ENCODE measurements at regions of chr3 and their contacts with region 1.

Region 1: GRCh38 chr3:49673715-49674496 is at the start of gene APEH:
- DNase-seq: peak; percentile 88 to 99
- H3K4me3 ChIP-seq: peak within 1 kb of the TSS; percentile 84 to 91 (median 86)
- H3K27ac ChIP-seq: peak within 1 kb of the TSS; percentile 90
- H3K4me1 ChIP-seq: peaks cover 0 to 8% (median 5%) of the 10 kb centered on the region in 4 experiments; a peak in 4 of 7 replicates
- H3K27me3 ChIP-seq: no peaks in the 10 kb centered on the region; a peak in 1 of 7 replicates
- CTCF ChIP-seq: no peak
- EP300 ChIP-seq: 0 out of 3 replicates have a peak, but pooled peaks of 1 of the 2 experiments have one; percentile 6
- POLR2A ChIP-seq: peak in 1 of 2 experiments; percentile 66; a peak in 2 of 3 replicates
- RAD21 ChIP-seq: no peak
- total RNA-seq, gene APEH: 222 and 236 TPM in 2 replicates

Region 2: DNA sequence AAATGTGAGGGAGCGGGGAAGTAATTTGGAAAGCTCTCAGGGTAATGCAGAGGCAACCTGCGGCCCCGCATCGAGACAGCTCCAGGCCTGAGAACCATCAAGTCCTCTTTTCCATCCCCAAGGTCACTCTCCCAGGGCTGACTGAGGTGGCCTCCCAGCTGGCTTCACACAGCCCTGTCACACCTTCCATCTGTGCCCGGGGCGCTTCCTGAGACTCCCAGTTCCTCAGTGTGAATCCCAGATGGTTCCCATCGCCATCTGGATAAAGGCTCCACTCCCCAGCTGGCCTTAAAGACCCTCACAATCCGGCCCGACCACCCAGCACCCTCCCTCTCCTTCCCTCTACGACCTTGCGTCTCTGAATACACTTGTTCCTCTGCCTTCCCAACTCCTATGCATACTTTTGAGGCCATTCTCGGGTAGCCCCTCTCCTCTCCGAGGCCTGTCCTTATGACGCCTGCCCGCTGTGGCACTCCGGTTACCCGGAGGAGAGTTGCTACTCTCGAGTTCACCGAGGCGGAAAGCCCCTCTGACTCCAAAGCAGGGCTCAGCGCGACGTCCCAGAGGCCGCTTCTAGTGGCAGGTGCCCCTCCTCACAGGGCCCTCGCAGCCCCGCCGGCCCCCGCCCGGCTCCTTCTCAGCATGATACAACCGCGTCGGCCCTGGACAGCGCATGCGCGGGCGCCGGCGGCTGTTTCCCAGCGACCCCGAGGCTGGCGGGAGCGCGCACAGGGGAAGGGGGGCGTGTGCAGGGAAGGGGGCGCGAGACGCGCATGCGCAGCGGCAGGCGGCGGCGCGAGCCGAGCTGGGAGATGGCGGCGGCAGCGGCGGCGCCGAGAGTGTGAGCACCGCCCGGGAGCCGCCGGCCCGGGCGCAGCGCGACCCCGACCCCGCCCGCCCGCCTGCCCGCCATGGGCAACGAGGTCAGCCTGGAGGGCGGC is 119.9 kb before region 1 on chr3 and contains the start of gene BSN:
- CTCF ChIA-PET with region 1: interaction called, 30 read pairs
- POLR2A ChIA-PET with region 1: interaction called, 4 read pairs
- DNase-seq: peak; percentile 76 to 97
- H3K4me3 ChIP-seq: peak within 1 kb of the TSS; percentile 78 to 96 (median 90)
- H3K27ac ChIP-seq: peak within 1 kb of the TSS; percentile 27; the same call in 1 of the 2 replicates
- H3K4me1 ChIP-seq: peaks cover 0 to 14% (median 4%) of the 10 kb centered on the region in 4 experiments; a peak in 5 of 7 replicates
- H3K27me3 ChIP-seq: peaks cover 0 to 11% (median 6%) of the 10 kb centered on the region in 4 experiments; a peak in 3 of 7 replicates
- CTCF ChIP-seq: peak in 1 of 3 experiments; percentile 2; a peak in 1 of 4 replicates
- EP300 ChIP-seq: no peak
- POLR2A ChIP-seq: no peak
- RAD21 ChIP-seq: no peak
- total RNA-seq, gene BSN: 2.9 and 3.0 TPM in 2 replicates

Region 3: GRCh38 chr3:49638445-49638844 is 35.5 kb before region 1 on chr3:
- CTCF ChIA-PET with region 1: interaction called, 12 read pairs
- POLR2A ChIA-PET with region 1: interaction called, 3 read pairs
- DNase-seq: no peak
- H3K4me3 ChIP-seq: no peak overlapping the region
- H3K27ac ChIP-seq: no peak overlapping the region
- H3K4me1 ChIP-seq: peaks cover 0 to 3% (median 0%) of the 10 kb centered on the region in 4 experiments; a peak in 1 of 7 replicates
- H3K27me3 ChIP-seq: no peaks in the 10 kb centered on the region
- CTCF ChIP-seq: no peak
- EP300 ChIP-seq: no peak
- POLR2A ChIP-seq: no peak
- RAD21 ChIP-seq: no peak

Region 4: DNA sequence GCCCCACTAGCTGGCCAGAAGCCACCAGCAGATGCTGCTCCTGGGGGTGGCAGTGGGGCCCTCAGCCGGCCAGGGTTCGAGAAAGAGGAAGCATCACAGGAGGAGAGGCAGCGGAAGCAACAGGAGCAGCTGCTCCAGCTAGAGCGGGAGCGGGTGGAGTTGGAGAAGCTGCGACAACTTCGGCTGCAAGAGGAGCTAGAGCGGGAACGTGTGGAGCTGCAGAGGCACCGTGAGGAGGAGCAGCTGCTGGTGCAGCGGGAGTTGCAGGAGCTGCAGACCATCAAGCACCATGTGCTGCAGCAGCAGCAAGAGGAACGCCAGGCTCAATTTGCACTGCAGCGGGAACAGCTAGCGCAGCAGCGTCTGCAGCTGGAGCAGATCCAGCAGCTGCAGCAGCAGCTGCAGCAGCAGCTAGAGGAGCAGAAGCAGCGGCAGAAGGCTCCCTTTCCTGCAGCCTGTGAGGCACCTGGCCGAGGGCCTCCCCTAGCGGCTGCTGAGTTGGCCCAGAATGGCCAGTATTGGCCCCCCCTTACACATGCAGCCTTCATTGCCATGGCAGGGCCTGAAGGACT is 17.3 kb before region 1 on chr3:
- CTCF ChIA-PET with region 1: interaction called, 11 read pairs
- POLR2A ChIA-PET with region 1: interaction called, 3 read pairs
- DNase-seq: no peak
- H3K4me3 ChIP-seq: no peak overlapping the region
- H3K27ac ChIP-seq: no peak overlapping the region
- H3K4me1 ChIP-seq: no peaks in the 10 kb centered on the region
- H3K27me3 ChIP-seq: no peaks in the 10 kb centered on the region
- CTCF ChIP-seq: peak in 2 of 3 experiments; percentile 10 to 16; a peak in 1 of 4 replicates
- EP300 ChIP-seq: no peak
- POLR2A ChIP-seq: no peak
- RAD21 ChIP-seq: peak in 1 of 2 experiments; percentile 38; a peak in 1 of 4 replicates

Region 5: GRCh38 chr3:49726651-49726965 is 52.7 kb after region 1 on chr3:
- CTCF ChIA-PET with region 1: no interaction called
- POLR2A ChIA-PET with region 1: no interaction called
- DNase-seq: no peak
- H3K4me3 ChIP-seq: no peak overlapping the region
- H3K27ac ChIP-seq: no peak overlapping the region
- H3K4me1 ChIP-seq: peaks cover 0 to 15% (median 8%) of the 10 kb centered on the region in 4 experiments; a peak in 6 of 7 replicates
- H3K27me3 ChIP-seq: no peaks in the 10 kb centered on the region
- CTCF ChIP-seq: no peak
- EP300 ChIP-seq: no peak
- POLR2A ChIP-seq: no peak
- RAD21 ChIP-seq: no peak

Region 6: DNA sequence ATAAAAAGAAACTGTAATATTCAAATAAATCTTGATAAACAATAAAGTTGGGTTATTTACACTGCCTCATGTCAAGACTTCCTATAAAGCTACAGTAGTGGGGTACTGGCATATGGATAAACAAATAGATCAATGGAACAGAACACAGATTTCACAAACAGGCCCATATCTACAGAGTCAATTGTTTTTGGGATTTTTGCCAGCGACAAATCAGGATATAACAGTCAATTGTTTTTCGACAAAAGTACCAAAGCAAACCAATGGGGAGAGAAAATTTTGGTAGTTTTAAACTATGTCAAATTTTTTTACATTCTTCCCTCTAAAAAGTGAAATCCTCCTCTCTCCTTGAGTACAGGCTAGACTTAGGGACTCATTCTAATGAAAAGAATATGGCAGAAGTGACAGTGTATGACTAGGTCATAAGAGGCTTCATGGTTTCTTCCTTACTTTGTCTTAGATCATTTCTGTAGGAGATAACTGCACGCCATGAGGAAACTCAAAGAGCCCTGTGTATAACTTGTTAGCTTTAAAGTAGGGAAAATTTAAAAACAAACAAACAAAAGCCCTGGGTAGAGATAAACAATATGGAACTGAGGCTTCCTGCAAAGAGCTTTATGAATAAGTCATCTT is 95.5 kb after region 1 on chr3:
- CTCF ChIA-PET with region 1: no interaction called
- POLR2A ChIA-PET with region 1: no interaction called
- DNase-seq: no peak
- H3K4me3 ChIP-seq: no peak overlapping the region
- H3K27ac ChIP-seq: no peak overlapping the region
- H3K4me1 ChIP-seq: no peaks in the 10 kb centered on the region
- H3K27me3 ChIP-seq: no peaks in the 10 kb centered on the region
- CTCF ChIP-seq: no peak
- EP300 ChIP-seq: no peak
- POLR2A ChIP-seq: no peak
- RAD21 ChIP-seq: no peak

Measured in H1 (cell line).